ENCODE measurements at regions of chr6 and their contacts with region 1.

Region 1: DNA sequence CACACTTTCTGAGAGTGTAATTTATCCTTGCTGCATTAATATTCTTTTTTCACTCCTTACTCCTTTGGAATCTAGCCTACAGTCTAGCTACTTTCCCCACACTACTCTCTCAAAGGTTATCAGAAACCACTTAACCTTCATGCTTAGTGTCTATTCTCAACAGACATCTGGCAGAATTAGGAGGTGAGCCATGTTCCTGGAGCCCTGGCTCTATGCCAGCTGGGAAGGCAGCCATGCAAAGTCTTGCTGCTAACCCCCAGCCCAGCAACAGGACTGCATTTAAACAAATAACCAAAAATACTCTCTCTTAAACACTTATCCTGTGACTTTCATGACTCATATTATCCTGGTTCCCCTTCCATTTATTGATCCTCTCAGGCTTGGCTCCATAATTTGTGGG is 260.2 kb downstream of the BCKDHB start:
- DNase-seq: no peak
- ATAC-seq: no peak

Region 2: GRCh38 chr6:80235647-80236046 is 131.1 kb before region 1 on chr6:
- intact Hi-C with region 1: no loop called
- DNase-seq: no peak
- ATAC-seq: peak; percentile 30

Region 3: GRCh38 chr6:80340280-80340679 is 26.4 kb before region 1 on chr6:
- intact Hi-C with region 1: loop called (anchors 1 kb)
- DNase-seq: no peak
- ATAC-seq: no peak

Region 4: GRCh38 chr6:80402266-80402665 is 35.6 kb after region 1 on chr6:
- intact Hi-C with region 1: no loop called
- DNase-seq: no peak
- ATAC-seq: no peak